A673 (cell line): ENCODE measurements at regions of chr10 and their contacts with region 1.

Region 1: GRCh38 chr10:22550732-22551131 is 163.6 kb downstream of the PIP4K2A start:
- DNase-seq: peak; percentile 71
- H3K4me3 ChIP-seq: no peak overlapping the region
- H3K27ac ChIP-seq: no peak overlapping the region
- H3K4me1 ChIP-seq: no peaks in the 10 kb centered on the region
- H3K27me3 ChIP-seq: no peaks in the 10 kb centered on the region
- CTCF ChIP-seq: peak; percentile 79

Region 2: GRCh38 chr10:22294695-22295094 is 256.0 kb before region 1 on chr10:
- CTCF ChIA-PET with region 1: no interaction called
- POLR2A ChIA-PET with region 1: no interaction called
- intact Hi-C with region 1: no loop called
- DNase-seq: no peak
- H3K4me3 ChIP-seq: no peak overlapping the region
- H3K27ac ChIP-seq: no peak overlapping the region
- H3K4me1 ChIP-seq: peaks cover 8% of the 10 kb centered on the region
- H3K27me3 ChIP-seq: no peaks in the 10 kb centered on the region
- CTCF ChIP-seq: no peak

Region 3: GRCh38 chr10:22379059-22379458 is 171.7 kb before region 1 on chr10:
- CTCF ChIA-PET with region 1: no interaction called
- POLR2A ChIA-PET with region 1: no interaction called
- intact Hi-C with region 1: no loop called
- DNase-seq: no peak
- H3K4me3 ChIP-seq: no peak overlapping the region
- H3K27ac ChIP-seq: no peak overlapping the region
- H3K4me1 ChIP-seq: no peaks in the 10 kb centered on the region
- H3K27me3 ChIP-seq: no peaks in the 10 kb centered on the region
- CTCF ChIP-seq: no peak

Region 4: GRCh38 chr10:23067939-23068775 is 517.4 kb after region 1 on chr10:
- CTCF ChIA-PET with region 1: interaction called, 6 read pairs
- POLR2A ChIA-PET with region 1: no interaction called
- intact Hi-C with region 1: loop called (anchors 10 kb)
- DNase-seq: peak; percentile 79
- H3K4me3 ChIP-seq: no peak overlapping the region
- H3K27ac ChIP-seq: no peak overlapping the region
- H3K4me1 ChIP-seq: peaks cover 5% of the 10 kb centered on the region
- H3K27me3 ChIP-seq: no peaks in the 10 kb centered on the region
- CTCF ChIP-seq: peak; percentile 89